Activated B cell treated with CpG ODN at 0.5 μM for 24 hours (primary cell): ENCODE measurements at regions of chr6 and their contacts with region 1.

Region 1: GRCh38 chr6:2353412-2354137 is 108.2 kb upstream of the GMDS start:
- DNase-seq: no peak
- ATAC-seq: no peak
- H3K4me3 Mint-ChIP-seq: no peak overlapping the region
- H3K27ac Mint-ChIP-seq: no peak overlapping the region
- H3K4me1 Mint-ChIP-seq: no peaks in the 10 kb centered on the region
- H3K27me3 Mint-ChIP-seq: no peaks in the 10 kb centered on the region
- CTCF ChIP-seq: no peak

Region 2: GRCh38 chr6:1596088-1596852 is 757.3 kb before region 1 on chr6:
- CTCF ChIA-PET with region 1: interaction called, 34 read pairs
- POLR2A ChIA-PET with region 1: no interaction called
- intact Hi-C with region 1: loop called (anchors 1 kb)
- DNase-seq: peak; percentile 50
- ATAC-seq: peak; percentile 87
- H3K4me3 Mint-ChIP-seq: no peak overlapping the region
- H3K27ac Mint-ChIP-seq: no peak overlapping the region
- H3K4me1 Mint-ChIP-seq: peaks cover 4% of the 10 kb centered on the region
- H3K27me3 Mint-ChIP-seq: peaks cover 49% of the 10 kb centered on the region
- CTCF ChIP-seq: no peak

Region 3: DNA sequence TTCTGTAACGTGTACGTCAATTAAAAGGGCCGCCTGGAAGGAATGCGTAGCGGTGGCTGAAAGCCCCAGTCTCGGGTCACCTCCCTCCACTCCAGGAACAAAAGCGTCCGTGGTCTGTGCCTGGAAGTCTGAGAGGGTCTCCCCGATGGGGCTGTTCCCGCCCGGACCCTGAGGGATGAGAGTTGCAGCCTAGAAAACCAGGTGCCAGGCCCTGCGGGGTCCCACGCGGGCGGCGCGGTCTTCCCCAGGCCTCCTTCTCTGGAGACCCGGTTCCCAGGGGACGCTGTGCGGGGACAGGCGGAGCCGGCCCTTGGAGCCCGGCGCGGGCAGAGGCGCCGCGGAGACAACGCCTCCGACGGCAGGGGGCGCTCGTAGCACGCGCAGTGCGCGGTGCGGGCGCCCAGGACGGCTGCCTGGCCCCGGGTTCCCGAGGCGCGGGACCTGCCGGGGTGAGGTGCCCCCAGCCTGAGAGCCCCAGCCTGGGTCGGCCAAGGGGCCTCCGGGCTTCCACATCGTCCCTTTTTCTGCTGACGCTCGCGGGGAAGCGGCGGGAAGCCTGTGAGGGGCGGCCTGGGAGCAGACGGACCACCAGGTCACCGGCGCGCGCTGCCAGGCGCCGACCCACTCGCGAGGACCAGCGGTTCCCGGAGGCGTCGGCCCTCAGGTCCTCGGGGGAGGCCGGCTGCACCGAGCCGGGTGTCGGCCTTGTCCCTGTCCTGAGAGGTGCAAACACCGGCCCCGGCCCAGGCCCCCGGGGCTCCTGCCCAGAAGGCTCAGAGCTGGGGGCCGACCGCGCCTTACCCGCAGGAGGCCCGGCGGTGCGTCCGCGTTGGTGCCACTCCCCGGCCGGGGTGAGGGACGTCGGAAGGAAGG is 749.2 kb before region 1 on chr6:
- CTCF ChIA-PET with region 1: interaction called, 6 read pairs
- POLR2A ChIA-PET with region 1: interaction called, 3 read pairs
- intact Hi-C with region 1: loop called (anchors 1 kb)
- DNase-seq: peak; percentile 80
- ATAC-seq: peak; percentile 76
- H3K4me3 Mint-ChIP-seq: no peak overlapping the region
- H3K27ac Mint-ChIP-seq: no peak overlapping the region
- H3K4me1 Mint-ChIP-seq: peaks cover 34% of the 10 kb centered on the region
- H3K27me3 Mint-ChIP-seq: peaks cover 73% of the 10 kb centered on the region
- CTCF ChIP-seq: no peak

Region 4: DNA sequence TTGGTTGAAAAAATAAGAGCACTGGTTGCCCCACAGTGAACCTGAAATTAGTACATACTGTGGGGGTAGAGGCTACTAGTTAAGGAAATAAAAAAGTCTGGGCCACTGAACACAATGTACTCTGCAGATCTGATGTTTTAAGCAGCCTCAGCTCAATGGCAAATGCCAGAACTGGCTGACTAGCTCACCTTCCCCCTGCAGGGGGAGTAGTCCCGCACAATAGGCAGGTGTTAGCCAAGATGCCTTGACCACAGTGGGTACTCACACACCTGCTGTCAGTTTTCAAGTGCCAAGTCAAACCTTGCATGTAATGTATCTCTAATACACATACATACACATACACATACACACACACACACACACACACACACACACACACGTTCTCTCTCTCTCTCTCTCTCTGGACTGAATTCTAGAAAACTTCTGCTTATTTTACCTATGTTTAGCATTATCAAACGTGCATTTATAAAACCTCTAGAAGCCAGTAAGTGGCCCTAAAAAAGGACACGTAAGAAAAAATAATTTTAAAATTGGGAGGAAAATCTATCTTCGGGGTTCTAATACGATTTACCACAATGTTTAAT is 144.3 kb before region 1 on chr6:
- CTCF ChIA-PET with region 1: interaction called, 24 read pairs
- POLR2A ChIA-PET with region 1: no interaction called
- intact Hi-C with region 1: loop called (anchors 1 kb)
- DNase-seq: no peak
- ATAC-seq: peak; percentile 67
- H3K4me3 Mint-ChIP-seq: no peak overlapping the region
- H3K27ac Mint-ChIP-seq: no peak overlapping the region
- H3K4me1 Mint-ChIP-seq: no peaks in the 10 kb centered on the region
- H3K27me3 Mint-ChIP-seq: no peaks in the 10 kb centered on the region
- CTCF ChIP-seq: no peak

Region 5: DNA sequence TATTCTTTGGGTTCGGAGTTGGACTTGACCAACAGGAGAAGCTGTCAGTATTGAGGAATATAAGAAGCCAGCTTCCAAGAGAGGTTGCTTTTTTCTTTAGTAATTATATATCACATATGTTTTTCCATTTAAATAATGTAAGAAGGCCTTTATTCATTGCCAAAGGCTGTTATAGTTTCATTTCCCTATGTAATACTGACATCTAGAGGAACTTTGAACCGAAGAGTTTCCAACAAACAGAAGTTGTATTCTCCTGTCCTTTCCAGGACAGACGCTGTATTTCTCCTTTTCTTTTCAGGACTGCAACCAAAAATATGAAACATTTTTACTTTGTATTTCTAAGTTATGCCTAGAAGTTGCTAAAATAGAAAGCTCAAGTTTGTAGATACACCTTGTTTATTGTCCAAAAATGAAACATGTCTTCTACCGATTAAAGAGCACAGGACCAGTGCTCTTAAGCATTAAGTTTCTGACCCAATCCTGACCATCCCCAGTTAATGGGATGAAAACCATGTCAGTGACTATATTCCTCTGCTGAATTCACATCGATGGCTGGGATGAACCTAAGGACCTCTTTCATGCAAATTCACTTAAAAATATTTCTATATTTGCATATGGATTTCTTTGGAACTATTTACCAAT is 342.0 kb after region 1 on chr6:
- CTCF ChIA-PET with region 1: no interaction called
- POLR2A ChIA-PET with region 1: no interaction called
- intact Hi-C with region 1: loop called (anchors 1 kb)
- DNase-seq: no peak
- ATAC-seq: no peak
- H3K4me3 Mint-ChIP-seq: no peak overlapping the region
- H3K27ac Mint-ChIP-seq: no peak overlapping the region
- H3K4me1 Mint-ChIP-seq: no peaks in the 10 kb centered on the region
- H3K27me3 Mint-ChIP-seq: peaks cover 6% of the 10 kb centered on the region
- CTCF ChIP-seq: peak; percentile 28